A549 (cell line): ENCODE measurements at regions of chr12 and their contacts with region 1.

Region 1: GRCh38 chr12:56029666-56030293 is 8.9 kb downstream of the IKZF4 start:
- DNase-seq: peak; percentile 67 to 78
- ATAC-seq: peak; percentile 89 to 96
- H3K4me3 ChIP-seq: no peak overlapping the region
- H3K27ac ChIP-seq: no peak overlapping the region
- H3K4me1 ChIP-seq: no peaks in the 10 kb centered on the region
- CTCF ChIP-seq: peak; percentile 82
- EP300 ChIP-seq: no peak
- POLR2A ChIP-seq: no peak
- RAD21 ChIP-seq: peak; percentile 55 to 65; a peak in 4 of 5 replicates

Region 2: GRCh38 chr12:55922126-55922525 is 107.7 kb before region 1 on chr12:
- CTCF ChIA-PET with region 1: no interaction called
- POLR2A ChIA-PET with region 1: no interaction called
- DNase-seq: no peak
- ATAC-seq: no peak
- H3K4me3 ChIP-seq: no peak overlapping the region
- H3K27ac ChIP-seq: no peak overlapping the region
- H3K4me1 ChIP-seq: peaks cover 26% of the 10 kb centered on the region
- CTCF ChIP-seq: no peak
- EP300 ChIP-seq: no peak
- POLR2A ChIP-seq: no peak
- RAD21 ChIP-seq: no peak

Region 3: DNA sequence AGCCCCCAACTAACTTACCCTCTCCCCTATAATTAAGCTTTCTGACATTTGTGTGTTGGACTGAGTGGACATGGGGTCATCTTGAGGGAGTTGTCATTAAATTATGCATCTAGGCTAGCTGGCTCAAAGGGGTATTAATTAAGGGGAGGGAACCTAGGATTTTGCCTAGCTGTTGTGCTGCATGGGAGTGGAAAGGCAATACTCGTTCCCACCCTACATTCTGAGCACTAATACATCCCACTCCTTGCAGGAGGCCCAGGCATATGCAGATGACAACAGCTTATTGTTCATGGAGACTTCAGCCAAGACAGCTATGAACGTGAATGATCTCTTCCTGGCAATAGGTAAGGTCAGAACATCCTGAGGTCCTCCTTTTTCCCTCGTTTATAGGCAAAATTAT is 38.7 kb before region 1 on chr12:
- CTCF ChIA-PET with region 1: interaction called, 92 read pairs
- POLR2A ChIA-PET with region 1: interaction called, 3 read pairs
- DNase-seq: no peak
- ATAC-seq: no peak
- H3K4me3 ChIP-seq: no peak overlapping the region
- H3K27ac ChIP-seq: no peak overlapping the region
- H3K4me1 ChIP-seq: no peaks in the 10 kb centered on the region
- CTCF ChIP-seq: no peak
- EP300 ChIP-seq: no peak
- POLR2A ChIP-seq: no peak
- RAD21 ChIP-seq: no peak

Region 4: DNA sequence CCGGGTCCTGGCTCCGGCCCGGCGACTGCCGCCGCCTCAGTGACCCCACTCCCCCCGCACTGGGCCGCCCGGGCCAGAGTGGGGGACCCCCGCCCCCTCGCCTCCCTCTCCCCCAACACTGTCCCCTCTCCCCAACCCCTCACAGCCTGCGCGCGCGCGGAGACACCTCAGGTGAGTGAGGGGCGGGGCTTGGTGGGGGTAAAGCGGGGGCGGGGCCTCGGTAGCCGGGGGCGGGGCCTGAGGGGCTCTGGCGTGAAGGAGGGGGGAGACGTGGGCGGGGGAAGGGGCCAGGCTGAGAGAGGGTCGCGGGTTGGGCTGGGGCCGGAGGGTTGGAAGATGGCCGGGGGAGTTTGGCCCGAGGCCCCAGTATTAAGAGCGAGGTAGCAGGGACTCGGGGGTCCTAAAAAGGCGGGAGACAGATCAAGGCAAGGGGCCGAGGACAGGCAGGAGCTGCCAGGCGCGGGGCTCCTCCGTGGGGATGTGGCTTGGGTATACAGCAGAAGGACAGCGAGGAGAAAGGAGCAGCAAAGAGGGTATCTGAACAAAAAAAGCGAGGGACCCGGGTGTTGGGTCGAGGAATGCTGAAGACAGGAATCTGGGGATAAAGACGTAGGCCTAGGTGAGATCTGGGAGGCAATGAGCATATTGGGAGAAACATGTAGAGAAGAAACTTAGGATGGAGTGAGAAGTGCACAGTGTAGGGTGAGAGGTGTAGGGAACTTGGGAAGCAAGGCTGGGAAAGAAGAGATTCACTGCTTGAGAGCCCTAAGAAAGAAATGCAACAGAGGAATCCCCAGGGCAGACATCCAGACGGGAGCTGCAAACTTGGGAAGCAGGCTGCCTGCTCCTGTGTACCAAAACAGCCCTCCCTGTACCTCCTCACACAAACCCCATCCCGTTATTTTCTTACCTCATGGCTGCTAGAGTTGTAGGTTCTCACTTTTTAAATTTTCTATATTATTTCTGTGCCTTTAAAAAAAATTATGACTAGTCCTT is 21.9 kb before region 1 on chr12:
- CTCF ChIA-PET with region 1: interaction called, 32 read pairs
- POLR2A ChIA-PET with region 1: no interaction called
- DNase-seq: peak in 1 of 2 experiments; percentile 61
- ATAC-seq: peak; percentile 72 to 81
- H3K4me3 ChIP-seq: peak overlapping the region; percentile 98
- H3K27ac ChIP-seq: peak overlapping the region; percentile 98 to 99
- H3K4me1 ChIP-seq: peaks cover 6% of the 10 kb centered on the region; the same call in 2 of the 3 replicates
- CTCF ChIP-seq: no peak
- EP300 ChIP-seq: no peak
- POLR2A ChIP-seq: no peak
- RAD21 ChIP-seq: no peak

Region 5: DNA sequence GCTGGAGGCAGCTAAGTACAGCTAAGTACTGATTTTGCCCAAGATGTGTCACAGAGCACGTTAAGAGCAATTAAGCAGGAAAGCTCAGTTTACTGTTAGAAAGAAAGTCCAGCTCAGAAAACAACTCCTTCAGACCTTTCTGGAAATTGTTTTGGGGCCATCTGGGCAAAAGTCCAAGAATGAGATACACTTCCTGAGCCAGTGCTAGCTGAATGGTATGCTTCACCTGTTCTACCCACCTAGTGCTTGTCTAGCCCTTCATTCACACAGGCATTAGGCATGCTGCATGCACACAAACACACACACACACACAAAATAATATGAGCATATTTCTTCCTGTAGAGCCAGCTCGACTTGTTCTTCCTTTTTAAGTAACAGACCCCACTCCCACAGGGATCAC is 15.6 kb before region 1 on chr12:
- CTCF ChIA-PET with region 1: interaction called, 32 read pairs
- POLR2A ChIA-PET with region 1: no interaction called
- DNase-seq: no peak
- ATAC-seq: 0 out of 6 replicates have a peak, but pooled peaks of 1 of the 2 experiments have one; percentile 24
- H3K4me3 ChIP-seq: no peak overlapping the region
- H3K27ac ChIP-seq: no peak overlapping the region
- H3K4me1 ChIP-seq: no peaks in the 10 kb centered on the region
- CTCF ChIP-seq: no peak
- EP300 ChIP-seq: no peak
- POLR2A ChIP-seq: no peak
- RAD21 ChIP-seq: no peak

Region 6: DNA sequence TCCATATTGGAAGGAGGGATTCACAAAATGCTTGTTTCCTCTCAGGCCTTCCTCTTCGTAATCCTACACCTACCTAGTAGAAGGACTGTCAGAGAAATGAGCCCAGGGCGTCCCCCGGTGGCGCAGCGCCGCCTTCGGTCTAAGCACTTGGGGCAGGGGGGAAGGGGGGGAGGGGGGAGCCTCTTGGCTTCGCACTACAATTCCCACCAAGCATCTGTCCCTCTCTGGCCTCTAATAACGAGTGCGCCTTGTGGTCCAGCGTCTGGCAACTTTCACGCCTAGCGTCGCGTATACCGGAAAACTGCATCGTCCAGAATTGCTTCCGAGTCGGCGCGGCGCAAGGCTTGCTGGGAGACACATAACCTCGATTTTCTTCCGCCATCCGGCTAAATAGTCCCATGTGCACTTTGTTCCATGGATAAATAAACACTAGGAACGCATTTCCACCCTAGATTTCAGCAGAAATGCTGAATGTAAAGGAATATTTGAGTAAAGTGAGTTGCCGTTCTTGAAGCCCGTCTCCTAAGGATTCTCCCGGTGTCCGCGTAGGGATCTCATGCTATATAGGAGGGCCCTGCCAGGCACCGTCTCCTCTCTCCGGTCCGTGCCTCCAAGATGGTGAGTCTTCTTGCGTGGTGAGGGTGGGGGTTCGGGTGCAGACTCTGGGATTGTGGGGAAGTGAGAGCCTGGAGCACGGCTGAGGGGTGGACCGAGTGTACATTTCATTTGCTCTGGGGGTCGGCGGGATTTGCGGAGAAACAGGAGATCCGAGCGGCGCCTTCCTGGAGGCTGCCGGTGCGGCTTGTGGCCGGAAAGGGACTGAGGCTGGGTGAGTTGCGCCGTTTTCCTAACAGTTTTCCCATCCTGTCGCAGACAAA is 12.0 kb after region 1 on chr12 and contains the start of gene RPS26:
- CTCF ChIA-PET with region 1: interaction called, 18 read pairs
- POLR2A ChIA-PET with region 1: no interaction called
- DNase-seq: peak; percentile 91 to 100
- ATAC-seq: peak; percentile 96 to 97
- H3K4me3 ChIP-seq: peak within 1 kb of the TSS; percentile 74
- H3K27ac ChIP-seq: peak within 1 kb of the TSS; percentile 90 to 99
- H3K4me1 ChIP-seq: peaks cover 16% of the 10 kb centered on the region
- CTCF ChIP-seq: peak; percentile 71
- EP300 ChIP-seq: no peak
- POLR2A ChIP-seq: peak; percentile 99
- RAD21 ChIP-seq: peak; percentile 70 to 83
- polyA plus RNA-seq, gene RPS26: 513 and 524 TPM in 2 replicates

Region 7: GRCh38 chr12:56158926-56159461 is 129.2 kb after region 1 on chr12:
- CTCF ChIA-PET with region 1: no interaction called
- POLR2A ChIA-PET with region 1: no interaction called
- DNase-seq: peak; percentile 50 to 72
- ATAC-seq: peak in 1 of 2 experiments; percentile 46; a peak in 3 of 6 replicates
- H3K4me3 ChIP-seq: peak overlapping the region; percentile 74
- H3K27ac ChIP-seq: peak overlapping the region; percentile 90 to 97
- H3K4me1 ChIP-seq: peaks cover 35% of the 10 kb centered on the region
- CTCF ChIP-seq: no peak
- EP300 ChIP-seq: no peak
- POLR2A ChIP-seq: peak; percentile 34
- RAD21 ChIP-seq: no peak